ENCODE measurements at regions of chr20 and their contacts with region 1.

Region 1: GRCh38 chr20:44210422-44211176 is at the start of gene OSER1:
- DNase-seq: peak; percentile 98 to 99
- ATAC-seq: peak; percentile 98
- H3K4me3 ChIP-seq: peak within 1 kb of the TSS; percentile 79 to 92
- H3K27ac ChIP-seq: peak within 1 kb of the TSS; percentile 78 to 92
- H3K4me1 ChIP-seq: peaks cover 0 to 7% of the 10 kb centered on the region in 2 donors
- H3K27me3 ChIP-seq: no peaks in the 10 kb centered on the region
- total RNA-seq, gene OSER1: 26.7 to 34.2 TPM

Region 2: DNA sequence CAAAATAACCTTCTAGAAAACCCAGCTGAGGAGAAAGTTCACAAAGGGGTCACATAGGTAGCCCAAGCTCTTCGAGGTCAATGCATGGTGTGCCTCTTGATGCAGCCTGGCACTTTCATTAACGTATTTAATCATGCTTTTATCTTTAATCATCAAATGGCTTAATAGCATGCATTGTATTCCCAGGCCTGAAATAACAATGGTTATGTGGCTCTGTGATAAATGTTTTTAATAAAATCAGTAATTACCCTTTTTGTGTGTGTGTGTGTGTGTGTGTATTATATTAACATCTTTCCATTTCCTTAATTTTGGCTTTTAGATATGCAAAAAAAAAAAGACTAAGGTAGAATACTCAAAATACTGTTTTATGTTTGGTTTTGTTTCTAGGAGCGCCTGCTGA is 1702.7 kb before region 1 on chr20:
- intact Hi-C with region 1: no loop called
- DNase-seq: no peak
- ATAC-seq: no peak
- H3K4me3 ChIP-seq: no peak overlapping the region
- H3K27ac ChIP-seq: no peak overlapping the region
- H3K4me1 ChIP-seq: no peaks in the 10 kb centered on the region
- H3K27me3 ChIP-seq: no peaks in the 10 kb centered on the region

Region 3: DNA sequence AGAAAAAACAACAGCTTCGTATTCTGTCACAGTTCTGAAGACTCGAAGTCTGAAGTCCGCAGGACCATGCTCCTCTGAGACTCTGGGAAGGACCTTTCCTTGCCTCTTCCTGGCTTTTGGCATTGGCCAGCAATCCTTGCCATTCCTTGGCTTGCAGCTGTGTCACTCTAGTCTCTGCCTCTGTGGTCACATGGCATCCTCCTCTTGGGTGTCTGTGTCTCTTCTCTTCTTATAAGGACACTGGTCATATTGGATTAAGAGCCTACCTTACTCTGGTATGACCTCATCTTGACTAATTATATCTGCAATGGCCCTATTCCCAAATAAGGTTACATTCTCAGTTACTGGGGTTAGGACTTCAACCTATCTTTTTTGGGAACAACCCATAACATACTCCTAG is 434.0 kb before region 1 on chr20:
- intact Hi-C with region 1: no loop called
- DNase-seq: no peak
- ATAC-seq: no peak
- H3K4me3 ChIP-seq: no peak overlapping the region
- H3K27ac ChIP-seq: no peak overlapping the region
- H3K4me1 ChIP-seq: no peaks in the 10 kb centered on the region
- H3K27me3 ChIP-seq: no peaks in the 10 kb centered on the region

Region 4: GRCh38 chr20:44516491-44516890 is 305.9 kb after region 1 on chr20:
- intact Hi-C with region 1: no loop called
- DNase-seq: no peak
- ATAC-seq: no peak
- H3K4me3 ChIP-seq: no peak overlapping the region
- H3K27ac ChIP-seq: no peak overlapping the region
- H3K4me1 ChIP-seq: peaks cover 5% of the 10 kb centered on the region in 2 donors
- H3K27me3 ChIP-seq: no peaks in the 10 kb centered on the region

Region 5: DNA sequence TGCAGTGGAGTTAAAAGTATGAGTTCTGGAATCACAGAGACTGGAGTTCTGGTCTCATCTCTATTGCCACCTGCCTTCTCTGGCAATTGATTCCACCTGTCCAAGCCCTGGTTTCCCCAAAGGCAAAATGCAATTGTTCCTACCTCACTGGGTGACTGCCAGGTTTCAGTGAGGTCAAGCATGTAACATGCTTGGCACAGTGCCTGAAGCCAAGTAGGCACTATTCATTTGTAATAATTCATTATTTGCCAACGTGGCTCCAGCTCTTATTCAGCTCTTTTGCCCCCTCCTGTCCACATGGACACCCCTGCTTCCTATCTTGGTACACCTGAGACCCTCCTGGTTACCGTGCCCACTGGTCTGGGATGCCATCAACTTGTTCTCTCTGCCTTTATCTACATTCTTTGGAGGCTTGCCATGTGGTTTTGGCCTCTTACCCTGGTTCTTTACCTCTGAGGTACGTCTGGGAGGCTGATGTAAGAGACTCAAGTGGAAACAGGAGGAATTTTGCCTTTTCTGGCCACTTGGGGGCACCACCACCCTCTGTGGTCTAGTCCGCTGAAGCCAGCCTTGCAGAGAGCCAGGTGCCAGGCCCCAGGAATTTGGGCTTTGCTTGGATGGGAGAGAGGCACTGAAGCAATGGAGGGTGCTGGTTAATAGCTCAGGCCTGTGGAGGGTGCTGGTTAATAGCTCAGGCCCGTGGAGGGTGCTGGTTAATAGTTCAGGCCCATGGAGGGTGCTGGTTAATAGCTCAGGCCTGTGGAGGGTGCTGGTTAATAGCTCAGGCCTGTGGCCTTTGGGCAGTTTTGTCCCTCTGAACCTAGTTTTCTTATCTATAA is 536.8 kb after region 1 on chr20:
- intact Hi-C with region 1: loop called in 1 of 2 experiments (anchors 10 kb)
- DNase-seq: peak; percentile 85 to 92
- ATAC-seq: peak; percentile 73
- H3K4me3 ChIP-seq: peak overlapping the region in 1 of 2 donors; percentile 18
- H3K27ac ChIP-seq: peak overlapping the region in 1 of 2 donors; percentile 18
- H3K4me1 ChIP-seq: peaks cover 0 to 5% of the 10 kb centered on the region in 2 donors
- H3K27me3 ChIP-seq: no peaks in the 10 kb centered on the region

Region 6: GRCh38 chr20:45672765-45673164 is 1462.2 kb after region 1 on chr20:
- intact Hi-C with region 1: no loop called
- DNase-seq: no peak
- ATAC-seq: no peak
- H3K4me3 ChIP-seq: no peak overlapping the region
- H3K27ac ChIP-seq: no peak overlapping the region
- H3K4me1 ChIP-seq: no peaks in the 10 kb centered on the region
- H3K27me3 ChIP-seq: no peaks in the 10 kb centered on the region

Measured in aorta (tissue), 5 donors.